T-cell (primary cell): ENCODE measurements at regions of chr6 and their contacts with region 1.

Region 1: DNA sequence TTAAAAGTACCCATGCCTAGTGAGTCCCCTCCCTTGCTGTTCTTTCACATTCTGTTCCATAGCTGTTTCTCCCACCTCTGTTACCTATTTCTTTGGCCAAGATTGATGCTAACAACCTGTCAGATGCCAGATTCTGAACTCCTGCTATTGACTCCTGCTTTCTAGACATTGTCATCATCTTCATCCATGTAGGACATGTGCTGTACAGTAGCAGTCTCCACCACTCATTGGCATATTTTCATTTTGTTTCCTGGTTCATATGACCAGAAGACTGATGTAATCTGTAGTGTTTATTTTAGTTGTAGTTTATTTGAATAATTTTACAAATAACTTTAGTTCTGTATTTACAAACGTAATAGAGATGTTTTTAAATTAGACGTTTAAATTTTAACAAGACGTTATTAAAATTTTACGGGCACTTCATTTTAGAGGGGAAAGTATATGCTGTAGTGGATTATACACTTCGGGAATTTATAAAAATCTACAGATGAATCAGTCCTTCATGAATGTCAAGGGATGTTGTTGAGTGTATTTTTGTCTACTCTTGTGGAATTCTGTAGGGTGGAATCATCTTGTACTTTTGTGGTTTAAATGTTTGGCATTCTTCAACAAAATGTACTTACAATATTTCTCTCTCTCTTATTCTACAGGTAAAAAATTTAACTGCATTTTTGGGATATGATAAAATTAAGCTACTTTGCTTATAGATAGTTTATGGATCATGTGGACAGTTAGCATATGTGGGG is 34.1 kb downstream of the TRMT11 start:
- DNase-seq: no peak
- ATAC-seq: no peak
- H3K4me3 ChIP-seq: no peak overlapping the region
- H3K4me3 Mint-ChIP-seq: no peak overlapping the region
- H3K27ac ChIP-seq: no peak overlapping the region
- H3K27ac Mint-ChIP-seq: no peak overlapping the region
- H3K4me1 ChIP-seq: no peaks in the 10 kb centered on the region
- H3K4me1 Mint-ChIP-seq: no peaks in the 10 kb centered on the region
- H3K27me3 ChIP-seq: no peaks in the 10 kb centered on the region
- H3K27me3 Mint-ChIP-seq: no peaks in the 10 kb centered on the region

Region 2: DNA sequence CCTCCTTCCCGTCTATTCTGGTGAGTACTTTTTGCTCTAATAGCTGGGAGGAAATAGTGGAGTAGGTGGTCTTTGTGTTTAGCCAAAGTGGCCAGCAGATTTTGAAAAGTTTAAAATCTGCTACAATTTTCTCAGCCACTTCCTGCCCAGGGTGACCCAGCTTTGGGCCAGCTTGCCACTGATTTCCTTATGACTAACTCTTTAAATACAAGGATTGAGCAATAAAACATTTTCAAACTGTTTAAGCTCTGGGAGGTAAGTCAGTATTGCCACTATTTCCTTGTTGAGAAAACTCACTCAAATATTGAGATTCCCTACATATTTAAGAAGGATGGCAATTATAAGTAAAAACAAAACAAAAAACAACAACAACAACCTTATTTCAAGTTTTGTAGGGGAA is 20.3 kb after region 1 on chr6:
- CTCF ChIA-PET with region 1: no interaction called
- POLR2A ChIA-PET with region 1: no interaction called
- DNase-seq: no peak
- ATAC-seq: no peak
- H3K4me3 ChIP-seq: no peak overlapping the region
- H3K4me3 Mint-ChIP-seq: no peak overlapping the region
- H3K27ac ChIP-seq: no peak overlapping the region
- H3K27ac Mint-ChIP-seq: no peak overlapping the region
- H3K4me1 ChIP-seq: no peaks in the 10 kb centered on the region
- H3K4me1 Mint-ChIP-seq: no peaks in the 10 kb centered on the region
- H3K27me3 ChIP-seq: no peaks in the 10 kb centered on the region
- H3K27me3 Mint-ChIP-seq: no peaks in the 10 kb centered on the region

Region 3: GRCh38 chr6:127291495-127291894 is 1271.0 kb after region 1 on chr6:
- CTCF ChIA-PET with region 1: no interaction called
- POLR2A ChIA-PET with region 1: interaction called in 1 of 2 experiments, 14 read pairs
- DNase-seq: no peak
- ATAC-seq: peak in 2 of 4 experiments; percentile 26 to 38
- H3K4me3 ChIP-seq: no peak overlapping the region
- H3K4me3 Mint-ChIP-seq: peak overlapping the region; percentile 31 to 59 (median 53)
- H3K27ac ChIP-seq: peak overlapping the region; percentile 16
- H3K27ac Mint-ChIP-seq: peak overlapping the region; percentile 82 to 88
- H3K4me1 ChIP-seq: no peaks in the 10 kb centered on the region
- H3K4me1 Mint-ChIP-seq: peaks cover 34 to 48% (median 35%) of the 10 kb centered on the region in 3 donors
- H3K27me3 ChIP-seq: no peaks in the 10 kb centered on the region
- H3K27me3 Mint-ChIP-seq: no peaks in the 10 kb centered on the region